ENCODE measurements at regions of chr5 and their contacts with region 1.

Region 1: DNA sequence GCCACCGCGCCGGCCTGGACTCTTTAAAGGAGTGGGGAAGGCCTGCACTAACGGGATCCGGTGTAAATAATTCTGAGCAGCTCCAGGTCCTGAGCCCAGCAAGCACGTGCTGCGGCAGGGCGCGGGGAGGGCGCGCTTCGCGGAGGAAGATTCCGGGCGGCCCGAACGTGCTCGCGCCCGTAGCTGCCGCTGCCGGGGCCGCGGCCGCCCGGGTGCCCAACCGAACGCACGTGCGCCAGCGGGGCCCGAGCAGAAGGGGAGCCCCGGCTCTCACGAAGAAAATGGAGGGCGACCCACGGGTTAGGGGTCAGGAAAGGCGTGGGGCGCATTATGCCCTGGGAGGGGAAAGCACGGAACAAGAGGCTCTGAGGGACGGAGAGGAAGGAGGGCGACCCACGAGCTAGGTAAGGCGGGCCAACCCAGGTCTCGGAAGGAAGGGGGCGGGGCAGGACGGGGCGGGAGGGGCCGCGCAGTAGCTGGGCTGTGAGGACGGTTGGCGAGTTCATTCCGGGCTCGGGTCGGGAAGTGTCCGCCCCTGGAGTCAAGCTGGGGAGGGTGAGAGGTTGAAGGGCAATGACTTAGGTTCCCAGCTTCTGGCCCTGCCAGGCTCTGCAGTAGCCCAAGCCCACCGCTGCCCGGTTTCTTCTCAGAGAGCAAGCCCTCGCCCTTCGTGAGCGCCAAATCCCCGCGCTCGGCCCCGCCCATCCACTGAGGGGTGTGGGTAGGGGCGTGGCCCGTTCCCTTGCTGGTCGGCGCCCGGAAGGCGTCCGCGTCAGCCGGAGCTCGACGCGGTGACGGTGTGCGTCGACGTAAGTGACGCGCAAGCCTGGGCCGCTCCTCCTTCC is at the start of gene ZNF131:
- DNase-seq: peak; percentile 98
- ATAC-seq: peak; percentile 96
- H3K4me3 ChIP-seq: peak within 1 kb of the TSS; percentile 60
- H3K27ac ChIP-seq: peak within 1 kb of the TSS; percentile 86
- H3K4me1 ChIP-seq: 0 out of 2 replicates have a peak, but pooled peaks cover 2% of the 10 kb centered on the region
- H3K27me3 ChIP-seq: no peaks in the 10 kb centered on the region
- CTCF ChIP-seq: no peak
- POLR2A ChIP-seq: peak; percentile 75; the same call in 1 of the 2 replicates
- RAD21 ChIP-seq: no peak
- total RNA-seq, gene ZNF131: 36.2 and 47.8 TPM in 2 replicates

Region 2: DNA sequence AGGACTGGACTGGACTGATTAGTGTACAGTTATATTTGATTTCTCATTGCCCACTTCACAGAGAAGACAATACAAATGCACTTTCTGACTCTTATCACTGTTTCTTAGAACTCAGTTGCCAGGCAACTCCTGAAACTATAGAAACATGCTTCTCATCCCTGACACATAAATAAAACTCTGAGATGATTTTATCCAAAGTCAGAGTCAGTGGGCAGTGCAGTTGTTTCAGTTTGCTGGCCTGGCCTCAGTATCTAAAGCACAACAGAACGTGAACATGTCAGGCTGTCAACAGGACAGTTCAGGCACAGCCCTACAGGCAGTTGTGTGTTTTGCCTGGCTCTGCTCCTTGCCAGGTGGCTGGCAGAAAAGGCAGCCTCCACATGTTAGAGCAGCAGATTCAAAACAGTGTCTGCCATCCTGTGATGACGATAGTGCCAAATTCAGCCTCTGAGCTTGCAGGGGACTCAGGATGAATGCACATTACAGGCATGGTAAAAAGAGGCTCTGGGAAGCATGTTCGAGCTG is 429.5 kb before region 1 on chr5:
- CTCF ChIA-PET with region 1: no interaction called
- POLR2A ChIA-PET with region 1: no interaction called
- dilution Hi-C with region 1: no loop called
- in situ Hi-C with region 1: no loop called
- intact Hi-C with region 1: no loop called
- DNase-seq: peak; percentile 11
- ATAC-seq: no peak
- H3K4me3 ChIP-seq: no peak overlapping the region
- H3K27ac ChIP-seq: peak overlapping the region; percentile 52; the same call in 1 of the 2 replicates
- H3K4me1 ChIP-seq: peaks cover 2% of the 10 kb centered on the region; the same call in 1 of the 2 replicates
- H3K27me3 ChIP-seq: no peaks in the 10 kb centered on the region
- CTCF ChIP-seq: no peak
- POLR2A ChIP-seq: no peak
- RAD21 ChIP-seq: no peak

Region 3: GRCh38 chr5:42950440-42951292 is 170.3 kb before region 1 on chr5:
- CTCF ChIA-PET with region 1: no interaction called
- POLR2A ChIA-PET with region 1: no interaction called
- dilution Hi-C with region 1: no loop called
- in situ Hi-C with region 1: no loop called
- intact Hi-C with region 1: loop called (anchors 5 kb)
- DNase-seq: peak; percentile 100
- ATAC-seq: peak; percentile 78
- H3K4me3 ChIP-seq: peak overlapping the region; percentile 45
- H3K27ac ChIP-seq: peak overlapping the region; percentile 90
- H3K4me1 ChIP-seq: peaks cover 4% of the 10 kb centered on the region
- H3K27me3 ChIP-seq: no peaks in the 10 kb centered on the region
- CTCF ChIP-seq: no peak; the same call in 1 of the 2 replicates
- POLR2A ChIP-seq: peak; percentile 83
- RAD21 ChIP-seq: no peak

Region 4: GRCh38 chr5:43066799-43067741 is 53.9 kb before region 1 on chr5:
- CTCF ChIA-PET with region 1: no interaction called
- POLR2A ChIA-PET with region 1: interaction called, 4 read pairs
- dilution Hi-C with region 1: no loop called
- in situ Hi-C with region 1: no loop called
- intact Hi-C with region 1: loop called (anchors 5 kb)
- DNase-seq: peak; percentile 91
- ATAC-seq: peak; percentile 56
- H3K4me3 ChIP-seq: peak overlapping the region; percentile 69
- H3K27ac ChIP-seq: peak overlapping the region; percentile 88
- H3K4me1 ChIP-seq: peaks cover 4% of the 10 kb centered on the region
- H3K27me3 ChIP-seq: no peaks in the 10 kb centered on the region
- CTCF ChIP-seq: no peak
- POLR2A ChIP-seq: peak; percentile 89
- RAD21 ChIP-seq: no peak

Region 5: GRCh38 chr5:43191740-43192557 is 71.0 kb after region 1 on chr5 and contains the start of gene NIM1K:
- CTCF ChIA-PET with region 1: no interaction called
- POLR2A ChIA-PET with region 1: no interaction called
- dilution Hi-C with region 1: no loop called
- in situ Hi-C with region 1: no loop called
- intact Hi-C with region 1: loop called (anchors 5 kb)
- DNase-seq: peak; percentile 27
- ATAC-seq: peak; percentile 82
- H3K4me3 ChIP-seq: peak within 1 kb of the TSS; percentile 36
- H3K27ac ChIP-seq: no peak within 1 kb of the TSS
- H3K4me1 ChIP-seq: peaks cover 3% of the 10 kb centered on the region
- H3K27me3 ChIP-seq: no peaks in the 10 kb centered on the region
- CTCF ChIP-seq: no peak
- POLR2A ChIP-seq: no peak
- RAD21 ChIP-seq: no peak
- total RNA-seq, gene NIM1K: 0.54 and 0.56 TPM in 2 replicates

Region 6: GRCh38 chr5:43313035-43313853 is 192.3 kb after region 1 on chr5 and contains the start of gene HMGCS1:
- CTCF ChIA-PET with region 1: no interaction called
- POLR2A ChIA-PET with region 1: no interaction called
- dilution Hi-C with region 1: no loop called
- in situ Hi-C with region 1: loop called (anchors 25 kb)
- intact Hi-C with region 1: loop called (anchors 2 kb)
- DNase-seq: peak; percentile 100
- ATAC-seq: peak; percentile 97
- H3K4me3 ChIP-seq: peak within 1 kb of the TSS; percentile 69
- H3K27ac ChIP-seq: peak within 1 kb of the TSS; percentile 72
- H3K4me1 ChIP-seq: peaks cover 2% of the 10 kb centered on the region; the same call in 1 of the 2 replicates
- H3K27me3 ChIP-seq: no peaks in the 10 kb centered on the region
- CTCF ChIP-seq: 0 out of 2 replicates have a peak, but pooled peaks have one; percentile 2
- POLR2A ChIP-seq: peak; percentile 97
- RAD21 ChIP-seq: no peak
- total RNA-seq, gene HMGCS1: 30.6 and 32.8 TPM in 2 replicates